Endothelial cell of umbilical vein (primary cell): ENCODE measurements at regions of chr12 and their contacts with region 1.

Region 1: DNA sequence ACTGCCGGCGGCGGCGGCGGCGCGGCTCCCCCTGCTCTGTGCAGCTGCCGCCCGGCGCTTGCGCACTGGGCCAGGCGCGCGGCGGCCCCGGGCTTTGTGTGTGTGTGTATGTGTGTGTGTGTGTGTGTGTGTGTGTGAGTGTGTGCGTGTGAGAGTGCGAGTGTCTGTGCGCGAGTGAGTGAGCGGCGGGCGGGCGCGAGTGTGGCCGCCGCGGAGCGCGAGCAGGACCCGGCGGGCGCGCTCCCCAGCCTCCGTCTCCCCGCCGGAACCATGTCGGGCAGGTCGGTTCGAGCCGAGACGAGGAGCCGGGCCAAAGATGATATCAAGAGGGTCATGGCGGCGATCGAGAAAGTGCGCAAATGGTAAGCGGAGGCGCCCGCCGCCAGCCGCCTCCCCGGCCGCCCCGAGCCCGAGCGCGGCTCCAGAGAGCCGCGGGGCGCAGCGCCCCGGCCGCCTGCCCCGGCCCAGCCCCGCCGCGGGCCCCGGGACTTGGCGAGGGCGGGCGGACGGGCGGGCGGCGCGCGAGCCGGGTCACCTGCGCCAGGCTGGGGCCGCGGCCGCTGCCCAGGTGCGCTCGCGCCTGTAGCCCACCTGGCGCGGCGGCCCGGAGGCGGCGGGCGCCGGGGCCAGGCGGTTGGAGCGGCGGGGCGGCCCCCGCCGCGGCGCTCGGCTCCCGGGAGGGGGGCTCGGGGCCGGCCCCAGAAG is at the start of gene BCL7A:
- DNase-seq: peak; percentile 72
- H3K4me3 ChIP-seq: peak within 1 kb of the TSS; percentile 58 to 78 (median 70)
- H3K27ac ChIP-seq: peak within 1 kb of the TSS; percentile 46
- H3K4me1 ChIP-seq: peaks cover 19% of the 10 kb centered on the region
- H3K27me3 ChIP-seq: no peaks in the 10 kb centered on the region
- CTCF ChIP-seq: no peak
- POLR2A ChIP-seq: peak; percentile 39
- total RNA-seq, gene BCL7A: 11.1 and 12.6 TPM in 2 replicates

Region 2: DNA sequence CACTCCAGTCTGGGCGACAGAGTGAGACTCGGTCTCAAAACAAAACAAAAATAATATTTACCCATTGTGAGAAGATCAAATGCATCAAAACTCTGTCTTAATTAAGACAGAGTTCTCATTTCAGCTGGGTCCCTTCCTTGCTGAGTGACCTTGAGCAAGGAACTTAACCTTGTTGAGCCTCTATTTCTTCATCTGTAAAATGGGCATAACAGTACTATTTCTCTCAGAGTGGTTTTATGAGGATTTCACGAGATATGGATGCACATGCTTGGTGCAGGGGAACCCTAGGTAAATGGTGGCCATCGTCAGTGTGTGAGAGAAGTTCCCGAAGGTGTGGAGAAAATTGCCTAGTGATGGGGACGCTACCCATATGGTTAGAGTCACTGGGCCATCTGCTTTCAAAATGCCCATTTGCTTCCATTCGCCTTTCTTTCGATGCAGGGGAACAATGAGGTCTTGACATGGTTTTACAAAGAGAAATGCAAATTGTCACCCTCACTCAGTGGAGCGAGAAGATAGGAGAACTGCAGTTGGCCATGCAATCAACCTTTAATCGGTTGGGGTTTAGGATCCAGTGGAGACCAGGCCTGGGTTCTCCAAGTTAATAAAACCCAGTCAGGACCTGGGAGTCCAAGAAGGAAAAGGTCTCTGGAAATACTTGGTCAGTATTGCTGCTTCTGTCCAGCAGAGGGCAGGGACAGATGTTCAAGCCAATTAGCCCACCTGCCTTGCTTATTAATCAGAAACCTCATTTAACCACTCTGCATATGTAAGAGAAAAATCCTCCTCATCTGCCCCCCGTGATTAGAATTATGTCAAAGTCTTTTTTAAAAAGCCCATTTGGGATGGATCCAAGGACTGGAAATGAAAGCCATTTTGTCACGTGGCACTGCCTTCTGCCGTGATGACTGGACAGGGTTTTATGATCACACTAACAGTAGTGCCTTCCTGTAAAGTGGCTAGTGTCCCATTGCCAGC is 66.4 kb before region 1 on chr12:
- CTCF ChIA-PET with region 1: interaction called, 7 read pairs
- POLR2A ChIA-PET with region 1: no interaction called
- dilution Hi-C with region 1: no loop called
- intact Hi-C with region 1: loop called (anchors 2 kb)
- DNase-seq: peak; percentile 45
- H3K4me3 ChIP-seq: no peak overlapping the region
- H3K27ac ChIP-seq: no peak overlapping the region
- H3K4me1 ChIP-seq: no peaks in the 10 kb centered on the region
- H3K27me3 ChIP-seq: no peaks in the 10 kb centered on the region
- CTCF ChIP-seq: peak; percentile 58 to 67
- POLR2A ChIP-seq: no peak

Region 3: DNA sequence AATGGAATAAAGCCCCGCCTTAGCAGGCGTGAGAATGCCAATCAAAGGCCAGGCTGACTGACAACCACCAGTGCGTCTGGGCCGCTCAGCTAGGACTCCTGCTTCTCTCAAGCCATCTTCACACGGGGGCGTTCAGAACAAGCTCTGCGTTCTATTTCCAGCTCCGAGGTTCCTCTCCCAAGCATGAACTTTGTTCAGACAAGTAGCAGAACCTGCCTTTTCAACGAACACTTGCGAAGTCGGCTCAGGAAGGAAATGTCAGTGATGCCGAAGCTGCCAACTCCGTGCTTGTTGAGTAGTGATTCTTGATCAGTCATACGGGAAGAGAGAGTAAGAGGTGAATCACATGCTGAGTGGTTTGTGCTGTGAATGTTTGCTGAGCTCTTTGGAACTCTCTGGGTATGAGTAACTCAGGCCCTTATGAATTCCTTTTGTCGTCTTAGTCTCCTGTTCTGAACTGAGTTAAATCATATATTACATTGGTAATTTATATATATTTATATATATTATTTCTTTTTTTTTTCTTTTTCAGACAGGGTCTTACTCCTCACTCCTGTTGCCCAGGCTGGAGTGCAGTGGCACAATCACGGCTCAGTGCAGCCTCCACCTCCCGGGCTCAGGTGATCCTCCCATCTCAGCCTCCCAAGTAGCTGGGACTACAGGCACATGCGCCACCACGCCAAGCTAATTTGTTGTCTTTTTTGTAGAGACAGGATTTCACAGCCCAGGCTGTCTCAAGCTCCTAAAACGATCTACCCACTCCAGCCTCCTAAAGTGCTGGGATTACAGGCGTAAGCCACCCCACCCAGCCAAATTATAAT is 29.7 kb before region 1 on chr12:
- CTCF ChIA-PET with region 1: interaction called, 5 read pairs
- POLR2A ChIA-PET with region 1: no interaction called
- dilution Hi-C with region 1: no loop called
- intact Hi-C with region 1: loop called (anchors 2 kb)
- DNase-seq: peak; percentile 97
- H3K4me3 ChIP-seq: no peak overlapping the region
- H3K27ac ChIP-seq: peak overlapping the region; percentile 77
- H3K4me1 ChIP-seq: peaks cover 6% of the 10 kb centered on the region
- H3K27me3 ChIP-seq: no peaks in the 10 kb centered on the region
- CTCF ChIP-seq: no peak
- POLR2A ChIP-seq: no peak